Dendritic cell treated with granulocyte-macrophage colony-stimulating factor and Interleukin-4, amounts not matched to agents 40 ng/mL and 50 ng/mL, for 4 days (primary cell): ENCODE measurements at regions of chrX and their contacts with region 1.

Region 1: DNA sequence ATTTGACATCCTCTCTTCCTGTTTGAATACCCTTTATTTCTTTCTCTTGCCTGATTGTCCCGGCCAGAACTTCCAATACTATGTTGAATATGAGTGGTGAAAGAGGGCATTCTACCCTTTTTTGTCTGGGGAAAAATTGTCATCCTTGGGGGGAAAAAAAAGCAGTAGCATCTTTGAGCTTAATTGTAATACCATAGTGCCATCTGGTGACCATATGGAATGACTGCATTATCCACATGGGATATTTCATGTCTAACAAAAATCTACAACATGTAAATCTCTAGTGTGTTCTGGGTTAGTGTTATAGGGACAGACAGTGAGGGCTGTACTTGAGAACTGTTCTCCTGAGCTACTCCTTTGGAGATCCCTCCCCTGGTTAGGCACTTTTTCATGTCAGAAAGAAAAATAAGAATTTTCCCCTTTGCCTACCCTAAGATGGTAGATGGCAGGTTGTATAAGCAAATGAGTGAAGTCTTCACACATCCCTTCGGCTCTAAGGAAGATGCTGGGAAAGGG is 26.0 kb downstream of the CAPN6 start:
- H3K4me3 Mint-ChIP-seq: no peak overlapping the region
- H3K27ac Mint-ChIP-seq: no peak overlapping the region
- H3K4me1 Mint-ChIP-seq: no peaks in the 10 kb centered on the region
- H3K27me3 Mint-ChIP-seq: no peaks in the 10 kb centered on the region

Region 2: DNA sequence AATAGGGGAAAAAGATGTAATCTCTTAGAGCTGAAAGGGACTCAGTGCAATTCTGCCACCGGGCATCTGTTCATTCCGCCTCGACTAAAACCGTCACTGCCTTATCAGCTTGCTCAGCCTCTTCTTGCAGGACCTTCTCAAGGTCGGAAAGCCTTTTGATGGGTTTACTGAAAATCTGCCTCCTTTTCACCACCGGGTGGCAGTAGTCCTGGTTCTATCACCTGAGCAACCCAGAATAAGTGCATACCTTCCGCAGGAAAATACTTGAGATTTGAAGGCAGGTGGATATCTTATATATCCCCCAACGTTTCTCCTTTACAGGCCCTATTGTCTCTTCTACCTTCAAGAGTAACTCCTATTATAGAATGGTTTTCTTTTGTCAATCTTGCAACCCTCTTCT is 251.7 kb before region 1 on chrX:
- intact Hi-C with region 1: loop called (anchors 5 kb)
- H3K4me3 Mint-ChIP-seq: no peak overlapping the region
- H3K27ac Mint-ChIP-seq: no peak overlapping the region
- H3K4me1 Mint-ChIP-seq: no peaks in the 10 kb centered on the region
- H3K27me3 Mint-ChIP-seq: peaks cover 9% of the 10 kb centered on the region

Region 3: GRCh38 chrX:111098874-111099273 is 145.4 kb before region 1 on chrX:
- intact Hi-C with region 1: loop called (anchors 5 kb)
- H3K4me3 Mint-ChIP-seq: no peak overlapping the region
- H3K27ac Mint-ChIP-seq: no peak overlapping the region
- H3K4me1 Mint-ChIP-seq: peaks cover 11% of the 10 kb centered on the region
- H3K27me3 Mint-ChIP-seq: peaks cover 44% of the 10 kb centered on the region

Region 4: GRCh38 chrX:111168314-111168713 is 76.0 kb before region 1 on chrX:
- intact Hi-C with region 1: loop called (anchors 10 kb)
- H3K4me3 Mint-ChIP-seq: no peak overlapping the region
- H3K27ac Mint-ChIP-seq: no peak overlapping the region
- H3K4me1 Mint-ChIP-seq: peaks cover 21% of the 10 kb centered on the region
- H3K27me3 Mint-ChIP-seq: no peaks in the 10 kb centered on the region

Region 5: DNA sequence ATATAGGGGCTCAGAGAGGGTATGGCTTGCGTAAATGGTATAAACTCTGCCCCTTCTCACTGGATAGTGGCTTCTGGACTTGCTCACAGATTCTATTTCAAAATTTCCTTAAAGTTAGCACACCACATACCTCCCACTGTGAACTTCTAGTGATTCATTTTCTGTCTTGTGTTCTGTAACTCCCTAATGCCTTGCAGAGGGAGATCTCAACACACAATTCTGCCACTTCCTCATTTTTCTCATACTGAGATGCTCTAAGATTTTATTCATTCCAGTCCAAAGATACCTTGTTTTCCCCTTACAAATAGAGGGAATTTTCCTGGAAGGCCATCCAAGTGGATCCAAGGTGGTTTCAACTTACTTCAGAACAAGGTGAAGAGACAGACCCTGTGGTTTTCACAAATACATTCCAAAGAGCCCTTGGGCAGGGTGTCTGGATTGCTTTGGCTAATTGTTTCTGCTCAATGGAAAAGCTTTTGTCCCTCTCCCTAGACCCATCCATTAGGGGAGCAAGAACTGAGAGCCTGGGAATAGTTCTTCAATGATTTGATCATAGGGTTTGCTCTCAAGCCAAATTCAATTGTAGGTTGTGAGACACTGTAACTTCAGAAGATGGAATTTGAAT is 78.0 kb after region 1 on chrX:
- intact Hi-C with region 1: no loop called
- H3K4me3 Mint-ChIP-seq: no peak overlapping the region
- H3K27ac Mint-ChIP-seq: no peak overlapping the region
- H3K4me1 Mint-ChIP-seq: no peaks in the 10 kb centered on the region
- H3K27me3 Mint-ChIP-seq: no peaks in the 10 kb centered on the region